ENCODE measurements at regions of chr11 and their contacts with region 1.

Region 1: DNA sequence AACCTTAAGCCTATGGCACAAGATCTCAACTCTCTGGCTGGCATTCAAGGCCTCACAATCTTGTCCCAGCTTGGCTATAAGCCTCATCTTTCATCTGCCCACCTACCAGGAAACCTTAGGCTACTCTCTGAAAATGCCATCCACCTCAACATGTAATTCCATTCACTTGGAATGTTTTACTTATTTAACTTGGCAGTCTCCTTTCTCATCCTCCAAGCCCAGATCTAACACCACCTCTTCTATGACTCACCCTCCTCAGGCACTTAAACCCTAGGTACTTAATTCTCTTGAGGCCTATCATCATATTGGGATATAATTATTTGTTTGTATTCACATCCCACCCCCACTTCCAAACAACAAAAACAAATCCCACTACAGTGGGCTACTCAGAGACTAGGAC is 15.0 kb downstream of the POGLUT3 start:
- DNase-seq: no peak
- ATAC-seq: no peak
- H3K4me3 ChIP-seq: no peak overlapping the region
- H3K27ac ChIP-seq: no peak overlapping the region
- H3K4me1 ChIP-seq: no peaks in the 10 kb centered on the region
- H3K27me3 ChIP-seq: no peaks in the 10 kb centered on the region
- CTCF ChIP-seq: no peak
- EP300 ChIP-seq: no peak
- POLR2A ChIP-seq: no peak
- RAD21 ChIP-seq: no peak

Region 2: GRCh38 chr11:108467091-108467823 is 15.9 kb before region 1 on chr11 and contains the start of gene C11orf65:
- CTCF ChIA-PET with region 1: no interaction called
- POLR2A ChIA-PET with region 1: interaction called, 11 read pairs
- in situ Hi-C with region 1: no loop called
- intact Hi-C with region 1: no loop called
- DNase-seq: peak; percentile 94 to 97 (median 95)
- ATAC-seq: peak; percentile 98
- H3K4me3 ChIP-seq: peak within 1 kb of the TSS; percentile 54
- H3K27ac ChIP-seq: peak within 1 kb of the TSS; percentile 91
- H3K4me1 ChIP-seq: peaks cover 6 to 8% of the 10 kb centered on the region in 2 experiments; a peak in 4 of 5 replicates
- H3K27me3 ChIP-seq: no peaks in the 10 kb centered on the region
- CTCF ChIP-seq: no peak
- EP300 ChIP-seq: no peak; the same call in 1 of the 2 replicates
- POLR2A ChIP-seq: peak; percentile 99
- RAD21 ChIP-seq: peak in 1 of 2 experiments; percentile 15; a peak in 1 of 4 replicates
- polyA plus RNA-seq, gene C11orf65: 1.0 to 1.7 TPM

Measured in K562 (cell line).